ENCODE measurements at regions of chr17 and their contacts with region 1.

Region 1: GRCh38 chr17:77354420-77355241 is 213.9 kb downstream of the SEC14L1 start:
- DNase-seq: peak; percentile 72
- H3K4me3 ChIP-seq: no peak overlapping the region
- H3K27ac ChIP-seq: peak overlapping the region; percentile 61 to 76 (median 69)
- H3K4me1 ChIP-seq: peaks cover 18 to 35% (median 29%) of the 10 kb centered on the region in 4 donors
- H3K27me3 ChIP-seq: no peaks in the 10 kb centered on the region
- CTCF ChIP-seq: no peak
- EP300 ChIP-seq: no peak
- POLR2A ChIP-seq: no peak

Region 2: GRCh38 chr17:79315358-79316105 is 1960.9 kb after region 1 on chr17:
- in situ Hi-C with region 1: no loop called
- intact Hi-C with region 1: loop called (anchors 10 kb)
- DNase-seq: no peak
- H3K4me3 ChIP-seq: no peak overlapping the region
- H3K27ac ChIP-seq: no peak overlapping the region
- H3K4me1 ChIP-seq: no peaks in the 10 kb centered on the region
- H3K27me3 ChIP-seq: peaks cover 39% of the 10 kb centered on the region
- CTCF ChIP-seq: no peak
- EP300 ChIP-seq: no peak
- POLR2A ChIP-seq: no peak

Measured in transverse colon (tissue), 4 donors.